ENCODE measurements at regions of chr2 and their contacts with region 1.

Region 1: GRCh38 chr2:172102391-172103278 is at the start of gene DLX2:
- DNase-seq: peak; percentile 85
- ATAC-seq: peak; percentile 71
- H3K4me3 ChIP-seq: peak within 1 kb of the TSS; percentile 60 to 64
- H3K27ac ChIP-seq: peak within 1 kb of the TSS; percentile 53; the same call in 1 of the 2 replicates
- H3K4me1 ChIP-seq: peaks cover 41 to 57% of the 10 kb centered on the region in 2 experiments
- H3K27me3 ChIP-seq: no peaks in the 10 kb centered on the region
- CTCF ChIP-seq: no peak
- POLR2A ChIP-seq: no peak
- RAD21 ChIP-seq: no peak
- total RNA-seq, gene DLX2: 3.7 TPM

Region 2: GRCh38 chr2:171574149-171574795 is 528.4 kb before region 1 on chr2:
- CTCF ChIA-PET with region 1: interaction called, 8 read pairs
- POLR2A ChIA-PET with region 1: no interaction called
- RAD21 ChIA-PET with region 1: no interaction called
- intact Hi-C with region 1: loop called (anchors 1 kb)
- DNase-seq: peak; percentile 54
- ATAC-seq: peak; percentile 99
- H3K4me3 ChIP-seq: no peak overlapping the region
- H3K27ac ChIP-seq: no peak overlapping the region
- H3K4me1 ChIP-seq: 0 out of 4 replicates have a peak, but pooled peaks cover 0 to 6% of the 10 kb centered on the region in 2 experiments
- H3K27me3 ChIP-seq: no peaks in the 10 kb centered on the region
- CTCF ChIP-seq: peak; percentile 73 to 97 (median 88)
- POLR2A ChIP-seq: no peak
- RAD21 ChIP-seq: peak; percentile 97

Region 3: DNA sequence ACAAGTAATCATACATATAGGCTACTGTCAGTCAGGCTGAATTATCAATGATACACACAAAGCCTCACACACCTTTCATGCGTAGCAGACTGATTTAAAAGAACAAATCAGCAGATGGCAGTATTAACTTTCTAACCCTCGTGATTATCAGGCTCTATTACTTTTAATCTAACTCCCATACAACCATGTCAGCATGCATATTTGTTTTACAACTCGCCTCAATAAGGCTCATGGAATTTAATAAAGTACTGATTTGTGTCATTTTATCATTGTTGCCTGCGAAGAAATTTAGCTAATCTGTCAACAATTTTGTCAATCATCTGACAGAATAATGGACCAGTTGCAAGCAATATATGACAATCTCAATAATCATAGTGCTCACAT is 291.4 kb before region 1 on chr2:
- CTCF ChIA-PET with region 1: interaction called, 4 read pairs
- POLR2A ChIA-PET with region 1: interaction called, 3 read pairs
- RAD21 ChIA-PET with region 1: interaction called in 1 of 2 experiments, 3 read pairs
- intact Hi-C with region 1: loop called (anchors 1 kb)
- DNase-seq: peak; percentile 8
- ATAC-seq: peak; percentile 66
- H3K4me3 ChIP-seq: no peak overlapping the region
- H3K27ac ChIP-seq: no peak overlapping the region
- H3K4me1 ChIP-seq: peaks cover 15 to 19% of the 10 kb centered on the region in 2 experiments
- H3K27me3 ChIP-seq: no peaks in the 10 kb centered on the region
- CTCF ChIP-seq: peak; percentile 10 to 70 (median 52); a peak in 4 of 6 replicates
- POLR2A ChIP-seq: no peak
- RAD21 ChIP-seq: peak; percentile 86

Region 4: GRCh38 chr2:171957061-171957460 is 145.6 kb before region 1 on chr2:
- CTCF ChIA-PET with region 1: interaction called, 4 read pairs
- POLR2A ChIA-PET with region 1: no interaction called
- RAD21 ChIA-PET with region 1: no interaction called
- intact Hi-C with region 1: loop called (anchors 1 kb)
- DNase-seq: no peak
- ATAC-seq: 0 out of 2 replicates have a peak, but pooled peaks have one; percentile 27
- H3K4me3 ChIP-seq: no peak overlapping the region
- H3K27ac ChIP-seq: no peak overlapping the region
- H3K4me1 ChIP-seq: peaks cover 6 to 15% of the 10 kb centered on the region in 2 experiments
- H3K27me3 ChIP-seq: no peaks in the 10 kb centered on the region
- CTCF ChIP-seq: peak in 2 of 3 experiments; percentile 22 to 26; a peak in 2 of 6 replicates
- POLR2A ChIP-seq: no peak
- RAD21 ChIP-seq: peak; percentile 57

Region 5: GRCh38 chr2:172009823-172010222 is 92.8 kb before region 1 on chr2:
- CTCF ChIA-PET with region 1: no interaction called
- POLR2A ChIA-PET with region 1: no interaction called
- RAD21 ChIA-PET with region 1: no interaction called
- intact Hi-C with region 1: loop called (anchors 2 kb)
- DNase-seq: no peak
- ATAC-seq: no peak
- H3K4me3 ChIP-seq: no peak overlapping the region
- H3K27ac ChIP-seq: no peak overlapping the region
- H3K4me1 ChIP-seq: peaks cover 9 to 24% of the 10 kb centered on the region in 2 experiments
- H3K27me3 ChIP-seq: no peaks in the 10 kb centered on the region
- CTCF ChIP-seq: no peak
- POLR2A ChIP-seq: no peak
- RAD21 ChIP-seq: no peak

Measured in HCT116 (cell line).